Left cardiac atrium (tissue), 4 donors: ENCODE measurements at regions of chr2 and their contacts with region 1.

Region 1: DNA sequence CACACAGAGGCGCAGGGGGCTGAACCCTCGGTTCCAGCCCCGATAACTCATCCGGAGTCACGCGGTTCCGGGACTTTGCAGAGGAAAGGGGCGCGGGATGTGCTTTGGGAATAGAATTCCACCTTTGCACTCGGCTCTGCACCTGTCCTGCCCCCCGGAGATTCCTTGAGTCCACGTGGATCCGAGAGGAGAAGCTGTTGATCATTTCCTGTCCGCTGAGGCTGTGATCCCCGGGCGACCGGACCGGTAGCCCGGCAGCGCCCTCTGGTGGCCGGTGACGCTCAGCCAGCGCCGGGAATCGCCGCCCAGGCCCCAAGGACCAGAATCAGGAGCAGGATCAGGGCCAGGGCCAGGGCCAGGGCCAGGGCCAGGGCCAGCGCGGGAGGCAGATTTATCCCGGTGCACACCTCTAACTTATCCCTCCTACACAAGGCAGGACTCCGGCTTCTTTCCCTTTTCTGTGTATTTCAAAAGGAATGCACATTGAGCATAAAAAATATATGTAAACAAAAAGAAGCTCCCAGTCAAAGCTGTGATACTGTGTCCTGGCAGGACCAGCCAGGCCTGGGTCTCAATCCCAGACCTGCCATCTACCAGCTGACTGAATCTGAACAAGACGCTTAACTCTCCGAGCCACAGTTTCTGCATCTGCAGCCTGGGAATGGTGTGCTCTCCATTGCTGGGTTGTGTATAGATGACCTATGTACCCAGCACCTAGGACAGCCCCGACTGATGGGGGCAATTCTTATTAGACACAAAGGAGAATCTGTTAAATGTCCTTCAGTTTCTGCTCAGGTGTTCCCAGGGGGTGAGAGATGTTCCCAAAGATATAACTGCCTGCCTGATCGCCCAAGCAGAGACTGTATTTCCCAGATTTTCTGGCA is 8.5 kb upstream of the SPATA3 start:
- DNase-seq: peak; percentile 85
- ATAC-seq: peak; percentile 89 to 93

Region 2: GRCh38 chr2:230153390-230153976 is 833.9 kb before region 1 on chr2:
- intact Hi-C with region 1: loop called in 1 of 2 experiments (anchors 5 kb)
- DNase-seq: no peak
- ATAC-seq: no peak

Region 3: GRCh38 chr2:230824406-230824978 is 162.9 kb before region 1 on chr2:
- intact Hi-C with region 1: loop called (anchors 1 to 5 kb)
- DNase-seq: peak; percentile 36
- ATAC-seq: peak; percentile 70 to 80

Region 4: DNA sequence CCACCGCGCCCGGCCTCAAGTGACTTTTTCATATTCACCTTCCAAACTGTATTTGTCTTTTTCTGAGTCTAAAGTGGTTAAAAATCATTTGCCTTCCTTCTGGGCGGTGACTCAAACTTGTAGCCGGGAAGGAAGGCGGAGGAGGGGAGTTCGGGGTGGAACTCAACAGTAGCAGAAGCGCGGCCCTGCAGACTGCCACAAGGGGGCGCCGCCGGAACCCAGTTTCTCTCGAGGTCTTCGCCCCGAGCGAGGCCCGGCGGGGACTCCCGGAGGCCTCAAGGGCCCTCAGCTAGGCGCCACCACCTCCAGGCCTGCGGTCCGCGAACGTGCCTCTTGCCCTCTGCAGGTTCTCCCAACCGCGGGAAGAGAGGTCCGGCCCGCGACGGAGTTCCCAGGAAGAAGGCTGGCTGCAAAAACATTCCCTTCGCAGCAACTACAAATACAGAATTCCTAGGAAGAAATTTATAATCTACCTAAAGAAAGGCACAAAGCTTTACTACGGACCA is 139.4 kb before region 1 on chr2:
- intact Hi-C with region 1: loop called in 1 of 2 experiments (anchors 5 kb)
- DNase-seq: peak; percentile 91
- ATAC-seq: peak; percentile 79 to 95

Region 5: DNA sequence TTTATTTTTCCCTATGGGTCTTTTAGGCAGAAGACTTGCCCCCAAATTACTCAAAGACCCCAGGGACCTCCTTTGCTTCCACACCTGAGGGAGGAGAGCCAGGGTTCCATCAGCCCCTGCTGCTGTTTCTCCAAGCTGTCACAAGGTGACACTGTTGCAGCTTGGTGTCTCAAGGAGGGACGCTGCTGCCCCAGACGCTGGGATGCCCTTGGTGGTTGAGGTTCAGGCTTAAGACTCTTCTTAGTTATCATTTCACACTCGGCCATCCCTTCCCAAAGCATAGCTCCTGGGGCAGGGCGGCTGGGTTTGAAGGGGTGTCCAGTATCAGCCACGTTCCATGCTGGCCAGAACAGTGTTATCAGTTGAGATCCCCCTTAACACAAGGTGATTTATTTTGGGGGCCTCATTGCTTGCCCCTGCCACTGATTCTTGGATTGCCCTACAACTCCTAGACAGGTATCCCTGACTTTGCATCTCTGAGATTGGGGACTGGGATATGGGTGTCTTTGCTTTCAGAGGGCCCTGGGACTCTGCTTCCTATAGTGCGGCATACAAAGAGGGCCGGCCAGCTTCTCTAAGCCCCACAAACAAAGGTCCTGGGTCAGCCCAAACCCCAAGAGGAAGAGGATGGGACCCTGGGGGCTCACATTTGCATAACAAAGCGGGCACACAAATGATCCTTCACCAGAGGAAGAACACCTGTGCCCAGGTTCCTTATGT is 85.0 kb before region 1 on chr2:
- intact Hi-C with region 1: loop called (anchors 1 to 2 kb)
- DNase-seq: peak; percentile 43
- ATAC-seq: peak; percentile 45 to 68